ENCODE measurements at regions of chr4 and their contacts with region 1.

Region 1: GRCh38 chr4:102809190-102809589 is 18.2 kb downstream of the UBE2D3 start:
- DNase-seq: no peak

Region 2: GRCh38 chr4:102637391-102637790 is 171.8 kb before region 1 on chr4:
- in situ Hi-C with region 1: loop called (anchors 10 kb)
- DNase-seq: no peak

Region 3: GRCh38 chr4:102687373-102687981 is 121.7 kb before region 1 on chr4:
- in situ Hi-C with region 1: no loop called
- DNase-seq: peak; percentile 67

Region 4: GRCh38 chr4:102758264-102759160 is 50.7 kb before region 1 on chr4:
- in situ Hi-C with region 1: no loop called
- DNase-seq: no peak

Measured in Caki2 (cell line).